AG04450 (cell line): ENCODE measurements at regions of chr7 and their contacts with region 1.

Region 1: DNA sequence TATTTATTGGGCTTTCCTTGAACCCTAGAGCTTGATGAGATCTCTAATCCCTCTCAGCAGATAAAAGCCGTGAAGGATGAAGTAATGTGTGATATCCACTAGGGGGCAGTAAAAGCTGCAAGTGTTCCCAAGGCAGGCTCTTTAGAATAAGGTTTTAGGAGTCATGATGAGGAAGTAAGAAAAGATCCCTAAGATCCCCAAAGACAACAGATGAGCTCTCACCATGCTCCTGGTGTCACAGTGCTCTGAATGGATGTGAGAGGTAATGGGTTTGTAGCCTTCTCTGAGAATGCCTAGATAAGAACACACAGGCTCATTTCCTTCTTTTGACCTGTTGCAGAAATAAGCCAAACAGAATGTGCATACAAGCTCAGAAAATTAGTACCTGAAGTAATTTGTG is 70.4 kb upstream of the ITPRID1 start:
- DNase-seq: no peak
- H3K4me3 ChIP-seq: no peak overlapping the region
- H3K27ac ChIP-seq: no peak overlapping the region
- H3K27me3 ChIP-seq: no peaks in the 10 kb centered on the region
- CTCF ChIP-seq: peak; percentile 73

Region 2: GRCh38 chr7:30963805-30964204 is 479.7 kb before region 1 on chr7 and contains the start of gene GHRHR:
- CTCF ChIA-PET with region 1: no interaction called
- POLR2A ChIA-PET with region 1: no interaction called
- DNase-seq: no peak
- H3K4me3 ChIP-seq: no peak within 1 kb of the TSS
- H3K27ac ChIP-seq: no peak within 1 kb of the TSS
- H3K27me3 ChIP-seq: no peaks in the 10 kb centered on the region
- CTCF ChIP-seq: no peak
- polyA plus RNA-seq, gene GHRHR: not detected in 2 replicates

Region 3: DNA sequence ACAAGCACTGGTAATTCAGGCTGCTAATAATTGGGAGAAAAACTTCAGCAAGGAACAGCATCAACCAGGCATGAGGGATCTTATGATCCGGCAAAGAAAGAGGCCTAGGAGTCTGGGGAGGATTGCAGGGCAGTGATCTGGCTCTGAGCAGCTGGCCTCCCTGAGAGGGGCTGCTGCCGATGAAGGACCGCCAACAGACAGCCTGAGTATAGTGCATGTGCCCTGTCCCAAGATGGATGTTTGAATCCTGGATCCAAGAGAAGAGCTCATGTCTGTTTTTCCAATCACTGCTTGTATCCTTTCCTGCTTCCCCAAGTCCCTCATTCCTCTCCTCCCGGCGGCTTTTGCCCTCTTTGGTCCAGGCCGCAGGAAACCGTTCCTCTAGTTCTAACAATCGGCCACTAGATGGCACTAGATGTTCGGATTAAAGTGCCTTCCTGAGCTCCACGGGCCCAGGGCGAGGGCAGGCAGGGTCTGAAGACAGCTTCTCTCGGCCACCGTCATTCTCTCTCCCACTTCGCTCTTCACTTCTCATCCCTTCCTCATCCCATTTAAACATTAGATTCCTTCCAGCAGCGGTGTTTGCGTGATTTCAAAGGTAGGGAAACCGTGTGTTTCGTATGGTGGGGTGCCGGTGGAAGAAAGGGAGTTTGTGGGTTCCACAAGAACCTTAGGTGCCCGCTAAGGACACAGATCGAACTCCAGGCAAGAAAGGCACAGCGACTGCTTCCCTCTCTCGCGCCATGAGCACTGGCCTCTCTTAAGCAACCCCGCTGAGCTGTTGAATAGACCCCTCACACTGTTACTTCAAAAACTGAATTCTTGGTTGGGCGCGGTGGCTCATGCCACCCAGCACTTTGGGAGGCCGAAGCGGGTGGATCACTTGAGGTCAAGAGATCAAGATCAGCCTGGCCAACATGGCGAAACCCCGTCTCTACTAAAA is 308.9 kb before region 1 on chr7:
- CTCF ChIA-PET with region 1: interaction called, 12 read pairs
- POLR2A ChIA-PET with region 1: no interaction called
- DNase-seq: peak; percentile 23
- H3K4me3 ChIP-seq: no peak overlapping the region
- H3K27ac ChIP-seq: no peak overlapping the region
- H3K27me3 ChIP-seq: no peaks in the 10 kb centered on the region
- CTCF ChIP-seq: peak; percentile 72

Region 4: DNA sequence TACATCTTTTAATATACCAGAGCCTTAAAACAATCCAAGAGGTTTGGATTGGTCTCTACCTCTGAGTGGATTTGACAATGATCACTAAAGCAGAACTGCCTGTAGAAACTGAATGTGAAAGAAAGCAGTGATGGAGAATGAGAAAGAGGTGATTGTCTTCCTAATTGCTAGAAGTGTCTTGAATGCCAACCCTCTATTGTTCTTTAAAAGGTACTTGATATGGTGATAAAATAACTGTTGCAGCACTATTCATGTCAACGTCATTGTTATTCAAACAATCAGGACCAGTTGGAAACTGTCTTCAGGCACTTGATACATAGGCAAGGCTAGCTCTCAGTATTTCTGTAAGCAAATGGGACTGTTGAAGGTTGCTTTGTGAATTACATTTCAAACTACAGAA is 22.6 kb after region 1 on chr7:
- CTCF ChIA-PET with region 1: interaction called, 10 read pairs
- POLR2A ChIA-PET with region 1: no interaction called
- DNase-seq: no peak
- H3K4me3 ChIP-seq: no peak overlapping the region
- H3K27ac ChIP-seq: no peak overlapping the region
- H3K27me3 ChIP-seq: no peaks in the 10 kb centered on the region
- CTCF ChIP-seq: no peak

Region 5: GRCh38 chr7:31633894-31634494 is 190.5 kb after region 1 on chr7:
- CTCF ChIA-PET with region 1: interaction called, 15 read pairs
- POLR2A ChIA-PET with region 1: no interaction called
- DNase-seq: peak; percentile 1
- H3K4me3 ChIP-seq: no peak overlapping the region
- H3K27ac ChIP-seq: no peak overlapping the region
- H3K27me3 ChIP-seq: no peaks in the 10 kb centered on the region
- CTCF ChIP-seq: peak; percentile 45

Region 6: DNA sequence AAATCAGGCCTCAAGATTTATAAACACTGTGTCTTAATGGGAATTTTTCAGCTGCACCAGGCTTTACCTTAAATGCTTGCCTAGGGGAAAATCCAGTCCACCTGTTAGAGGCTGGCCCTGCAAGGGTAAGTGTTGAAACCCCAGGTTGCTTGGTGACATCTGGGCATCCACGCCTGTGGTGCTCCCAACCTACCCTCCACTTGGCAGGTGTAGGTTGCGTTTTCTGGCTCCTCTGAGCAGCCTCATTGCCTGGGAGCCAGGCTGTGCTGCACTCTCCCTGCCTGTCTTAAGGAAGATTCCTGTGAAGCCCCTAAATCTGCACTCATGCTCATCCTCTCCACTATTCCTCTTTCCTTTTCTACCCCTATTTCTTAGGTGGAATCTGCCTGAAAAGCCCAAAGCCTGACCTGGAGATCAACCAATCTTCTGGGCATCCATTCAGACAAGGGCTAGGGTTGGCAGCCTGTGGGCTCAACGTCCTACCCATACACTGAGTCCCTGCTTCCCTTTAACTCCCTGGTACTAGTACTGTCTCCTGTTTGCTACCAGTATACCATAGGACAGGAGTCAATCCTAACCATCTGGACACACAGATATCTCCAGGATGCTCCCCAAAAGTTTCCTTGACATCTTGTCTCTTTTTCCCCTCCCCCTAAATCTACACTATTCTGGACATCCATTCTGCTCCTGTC is 476.4 kb after region 1 on chr7:
- CTCF ChIA-PET with region 1: no interaction called
- POLR2A ChIA-PET with region 1: no interaction called
- DNase-seq: no peak
- H3K4me3 ChIP-seq: no peak overlapping the region
- H3K27ac ChIP-seq: no peak overlapping the region
- H3K27me3 ChIP-seq: no peaks in the 10 kb centered on the region
- CTCF ChIP-seq: no peak